Gastrocnemius medialis (tissue), 4 donors: ENCODE measurements at regions of chr5 and their contacts with region 1.

Region 1: DNA sequence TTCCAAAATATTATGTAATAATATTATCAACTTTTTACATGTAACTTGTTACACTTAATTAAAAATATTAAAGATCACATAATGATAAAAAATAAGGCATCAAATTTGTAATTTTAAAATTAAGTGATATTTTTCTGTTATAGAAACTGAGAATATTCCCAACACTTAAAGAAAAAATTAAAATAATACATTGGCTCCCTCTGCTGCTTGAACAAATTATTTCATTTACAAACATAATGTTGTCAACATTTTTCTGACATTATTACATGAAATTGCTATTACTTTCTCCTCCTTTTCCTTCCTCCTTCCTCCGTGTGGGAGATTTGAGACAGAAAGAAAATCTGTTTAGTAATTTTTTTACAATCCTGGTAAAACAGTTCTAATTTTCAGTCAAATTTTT is 42.3 kb downstream of the RNF180 start:
- DNase-seq: no peak
- ATAC-seq: no peak
- H3K4me3 ChIP-seq: no peak overlapping the region
- H3K27ac ChIP-seq: no peak overlapping the region
- H3K4me1 ChIP-seq: peaks cover 0 to 5% of the 10 kb centered on the region in 2 donors
- H3K27me3 ChIP-seq: no peaks in the 10 kb centered on the region
- CTCF ChIP-seq: peak in 2 of 5 experiments; percentile 22
- POLR2A ChIP-seq: no peak

Region 2: GRCh38 chr5:64100197-64100596 is 107.8 kb before region 1 on chr5:
- in situ Hi-C with region 1: no loop called
- intact Hi-C with region 1: no loop called
- DNase-seq: no peak
- ATAC-seq: no peak
- H3K4me3 ChIP-seq: no peak overlapping the region
- H3K27ac ChIP-seq: no peak overlapping the region
- H3K4me1 ChIP-seq: no peaks in the 10 kb centered on the region
- H3K27me3 ChIP-seq: no peaks in the 10 kb centered on the region
- CTCF ChIP-seq: no peak
- POLR2A ChIP-seq: no peak

Region 3: GRCh38 chr5:64147849-64148441 is 60.0 kb before region 1 on chr5:
- in situ Hi-C with region 1: no loop called
- intact Hi-C with region 1: loop called (anchors 2 kb)
- DNase-seq: peak; percentile 16 to 25
- ATAC-seq: peak in 1 of 2 donors; percentile 65
- H3K4me3 ChIP-seq: no peak overlapping the region
- H3K27ac ChIP-seq: no peak overlapping the region
- H3K4me1 ChIP-seq: peaks cover 3 to 4% of the 10 kb centered on the region in 2 donors
- H3K27me3 ChIP-seq: no peaks in the 10 kb centered on the region
- CTCF ChIP-seq: peak; percentile 62 to 77 (median 71)
- POLR2A ChIP-seq: no peak